Breast epithelium (tissue), 4 donors: ENCODE measurements at regions of chr2 and their contacts with region 1.

Region 1: GRCh38 chr2:176781570-176782217 is 430.9 kb upstream of the HNRNPA3 start:
- DNase-seq: no peak
- H3K4me3 ChIP-seq: no peak overlapping the region
- H3K27ac ChIP-seq: no peak overlapping the region
- H3K4me1 ChIP-seq: no peaks in the 10 kb centered on the region
- H3K27me3 ChIP-seq: no peaks in the 10 kb centered on the region
- CTCF ChIP-seq: no peak
- POLR2A ChIP-seq: no peak

Region 2: GRCh38 chr2:175402571-175402970 is 1379.1 kb before region 1 on chr2:
- intact Hi-C with region 1: no loop called
- DNase-seq: no peak
- H3K4me3 ChIP-seq: no peak overlapping the region
- H3K27ac ChIP-seq: no peak overlapping the region
- H3K4me1 ChIP-seq: no peaks in the 10 kb centered on the region
- H3K27me3 ChIP-seq: no peaks in the 10 kb centered on the region
- CTCF ChIP-seq: no peak
- POLR2A ChIP-seq: no peak

Region 3: DNA sequence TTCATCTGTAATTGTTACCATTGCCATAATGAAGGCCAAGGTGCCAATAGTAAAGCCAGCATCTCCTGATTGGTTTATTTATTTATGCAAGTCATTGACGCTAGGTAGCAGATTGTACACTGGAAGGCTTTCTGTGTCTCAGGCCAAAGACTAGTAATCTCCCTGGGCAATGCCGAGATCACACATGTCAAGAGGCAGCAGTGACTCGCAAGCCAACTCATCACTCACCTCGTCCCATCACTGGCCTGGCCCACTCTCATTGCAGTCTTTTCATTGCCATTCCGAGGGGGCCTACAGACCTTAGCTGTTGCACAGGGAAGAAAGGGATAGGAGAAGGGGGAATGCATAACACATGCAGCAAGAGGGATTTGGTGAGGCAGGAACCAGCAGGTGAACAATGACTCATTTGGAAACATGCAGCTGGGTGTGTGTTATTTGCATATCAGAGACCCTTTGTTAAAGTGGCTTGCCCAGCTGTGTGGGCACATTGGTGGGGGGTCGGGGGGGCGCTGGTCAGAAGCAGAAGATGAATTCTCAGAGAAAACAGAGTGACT is 17.8 kb before region 1 on chr2:
- intact Hi-C with region 1: loop called (anchors 1 kb)
- DNase-seq: no peak
- H3K4me3 ChIP-seq: no peak overlapping the region
- H3K27ac ChIP-seq: no peak overlapping the region
- H3K4me1 ChIP-seq: no peaks in the 10 kb centered on the region
- H3K27me3 ChIP-seq: no peaks in the 10 kb centered on the region
- CTCF ChIP-seq: no peak
- POLR2A ChIP-seq: no peak